CD8-positive, alpha-beta memory T cell (primary cell): ENCODE measurements at regions of chr12 and their contacts with region 1.

Region 1: GRCh38 chr12:22083167-22083566 is 37.1 kb downstream of the CMAS start:
- DNase-seq: peak in 3 of 5 donors; percentile 5 to 30 (median 30)
- H3K4me3 ChIP-seq: no peak overlapping the region
- H3K4me3 Mint-ChIP-seq: no peak overlapping the region
- H3K27ac ChIP-seq: no peak overlapping the region
- H3K27ac Mint-ChIP-seq: no peak overlapping the region
- H3K4me1 ChIP-seq: no peaks in the 10 kb centered on the region
- H3K4me1 Mint-ChIP-seq: no peaks in the 10 kb centered on the region
- H3K27me3 ChIP-seq: no peaks in the 10 kb centered on the region
- H3K27me3 Mint-ChIP-seq: peaks cover 0 to 4% of the 10 kb centered on the region in 2 donors

Region 2: DNA sequence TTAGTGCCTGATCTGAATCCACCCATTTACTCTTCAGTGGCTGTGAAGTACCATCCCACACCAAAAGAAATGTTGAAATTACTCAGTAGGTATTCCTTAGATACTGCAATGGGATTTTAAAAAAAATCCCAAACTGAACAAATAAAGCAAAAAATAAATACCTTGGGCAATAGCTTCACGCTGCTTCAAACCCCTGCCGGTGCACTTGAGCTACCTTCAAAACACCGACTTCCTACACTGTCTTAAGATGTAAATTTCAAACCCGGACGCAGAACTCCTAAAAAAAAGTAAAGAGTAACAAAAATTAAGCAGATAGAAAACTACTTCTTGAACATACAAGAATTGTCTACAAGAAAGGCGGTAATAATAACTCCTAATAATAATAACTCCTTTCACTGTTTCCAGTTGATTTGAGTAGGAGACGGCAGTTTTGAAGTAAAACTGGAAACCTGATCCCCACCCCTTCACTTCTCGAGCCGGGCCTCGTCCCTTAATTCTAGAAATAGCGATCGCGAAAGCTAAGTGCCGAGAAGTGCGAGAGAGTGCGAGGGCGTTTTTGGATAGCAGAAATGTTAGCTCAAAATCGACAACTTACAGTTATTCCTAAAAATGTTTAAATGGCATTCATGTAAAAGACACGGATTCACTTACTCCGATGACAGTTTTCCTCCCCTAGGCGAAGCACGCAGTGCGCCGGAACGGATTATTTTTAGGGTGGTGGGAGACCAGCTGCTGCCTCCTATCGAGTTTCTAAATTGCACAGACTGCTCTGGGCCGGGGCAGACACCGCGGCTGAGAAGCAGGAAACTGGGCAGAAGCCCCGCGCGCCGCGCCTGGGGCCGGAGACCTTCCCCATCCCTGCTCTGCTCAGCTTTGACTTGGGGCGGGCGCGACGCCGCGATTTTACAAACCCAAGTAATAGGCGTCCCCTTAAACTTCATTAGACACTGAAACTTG is 142.3 kb before region 1 on chr12 and contains the start of gene ABCC9:
- CTCF ChIA-PET with region 1: no interaction called
- POLR2A ChIA-PET with region 1: no interaction called
- DNase-seq: no peak
- H3K4me3 ChIP-seq: no peak within 1 kb of the TSS
- H3K4me3 Mint-ChIP-seq: peak within 1 kb of the TSS in 6 of 7 donors; percentile 48 to 71 (median 66)
- H3K27ac ChIP-seq: no peak within 1 kb of the TSS
- H3K27ac Mint-ChIP-seq: peak within 1 kb of the TSS in 2 of 8 donors; percentile 41 to 72
- H3K4me1 ChIP-seq: peaks cover 14% of the 10 kb centered on the region
- H3K4me1 Mint-ChIP-seq: peaks cover 16 to 18% (median 17%) of the 10 kb centered on the region in 3 donors
- H3K27me3 ChIP-seq: peaks cover 13% of the 10 kb centered on the region
- H3K27me3 Mint-ChIP-seq: peaks cover 34 to 85% of the 10 kb centered on the region in 2 donors
- total RNA-seq, gene ABCC9: not detected

Region 3: GRCh38 chr12:22064968-22065367 is 18.2 kb before region 1 on chr12:
- CTCF ChIA-PET with region 1: interaction called, 4 read pairs
- POLR2A ChIA-PET with region 1: interaction called, 10 read pairs
- DNase-seq: no peak
- H3K4me3 ChIP-seq: no peak overlapping the region
- H3K4me3 Mint-ChIP-seq: no peak overlapping the region
- H3K27ac ChIP-seq: no peak overlapping the region
- H3K27ac Mint-ChIP-seq: no peak overlapping the region
- H3K4me1 ChIP-seq: no peaks in the 10 kb centered on the region
- H3K4me1 Mint-ChIP-seq: peaks cover 0 to 9% (median 7%) of the 10 kb centered on the region in 3 donors
- H3K27me3 ChIP-seq: no peaks in the 10 kb centered on the region
- H3K27me3 Mint-ChIP-seq: peaks cover 0 to 1% of the 10 kb centered on the region in 2 donors